ENCODE measurements at regions of chr14 and their contacts with region 1.

Region 1: DNA sequence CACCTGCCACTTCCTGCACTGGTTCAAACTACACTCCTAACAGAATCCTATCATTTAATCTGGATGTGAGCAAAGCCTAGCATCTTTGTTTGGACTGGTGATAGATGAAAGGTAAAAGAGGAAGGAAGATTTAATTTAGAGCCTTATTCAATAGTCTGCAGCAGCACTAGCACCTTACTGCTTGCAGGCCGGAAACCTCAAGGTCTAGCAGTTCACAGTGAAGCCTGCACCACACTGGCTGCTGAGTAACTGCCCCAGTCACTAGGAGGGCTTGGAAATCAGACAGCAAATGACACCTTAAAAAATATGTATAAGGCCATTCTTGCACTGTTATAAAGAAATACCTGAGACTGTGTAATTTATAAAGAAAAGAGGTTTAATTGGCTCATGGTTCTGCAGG is 358.0 kb downstream of the DAD1 start:
- DNase-seq: no peak
- H3K4me3 ChIP-seq: no peak overlapping the region
- CTCF ChIP-seq: no peak
- POLR2A ChIP-seq: no peak

Region 2: GRCh38 chr14:20278414-20278813 is 1952.6 kb before region 1 on chr14:
- intact Hi-C with region 1: no loop called
- DNase-seq: no peak
- H3K4me3 ChIP-seq: no peak overlapping the region
- CTCF ChIP-seq: no peak
- POLR2A ChIP-seq: no peak

Region 3: GRCh38 chr14:23816371-23816770 is 1585.4 kb after region 1 on chr14:
- intact Hi-C with region 1: loop called (anchors 10 kb)
- DNase-seq: no peak
- H3K4me3 ChIP-seq: no peak overlapping the region
- CTCF ChIP-seq: no peak
- POLR2A ChIP-seq: no peak